Vagina (tissue), 2 donors: ENCODE measurements at regions of chr2 and their contacts with region 1.

Region 1: GRCh38 chr2:142724713-142725349 is 152.6 kb upstream of the KYNU start:
- DNase-seq: no peak
- H3K4me3 ChIP-seq: no peak overlapping the region
- H3K27ac ChIP-seq: no peak overlapping the region
- H3K4me1 ChIP-seq: no peaks in the 10 kb centered on the region
- H3K27me3 ChIP-seq: no peaks in the 10 kb centered on the region
- CTCF ChIP-seq: no peak
- POLR2A ChIP-seq: no peak

Region 2: GRCh38 chr2:141468761-141469160 is 1256.1 kb before region 1 on chr2:
- intact Hi-C with region 1: loop called (anchors 5 kb)
- DNase-seq: no peak
- H3K4me3 ChIP-seq: no peak overlapping the region
- H3K27ac ChIP-seq: no peak overlapping the region
- H3K4me1 ChIP-seq: no peaks in the 10 kb centered on the region
- H3K27me3 ChIP-seq: no peaks in the 10 kb centered on the region
- CTCF ChIP-seq: no peak
- POLR2A ChIP-seq: no peak